Dorsolateral prefrontal cortex (tissue), 120 donors: ENCODE measurements at regions of chr3 and their contacts with region 1.

Region 1: GRCh38 chr3:132352541-132353143 is 35.4 kb downstream of the ACP3 start:
- DNase-seq: peak in 6 of 10 donors; percentile 7 to 63 (median 46)
- H3K4me3 ChIP-seq: no peak overlapping the region
- H3K27ac ChIP-seq: no peak overlapping the region
- H3K27me3 ChIP-seq: peaks cover 0 to 3% (median 0%) of the 10 kb centered on the region in 45 donors
- CTCF ChIP-seq: peak; percentile 52 to 95 (median 87)

Region 2: GRCh38 chr3:132399054-132399929 is 46.6 kb after region 1 on chr3:
- intact Hi-C with region 1: loop called (anchors 1 to 5 kb)
- DNase-seq: peak in 2 of 10 donors; percentile 41 to 42
- H3K4me3 ChIP-seq: no peak overlapping the region
- H3K27ac ChIP-seq: no peak overlapping the region
- H3K27me3 ChIP-seq: no peaks in the 10 kb centered on the region
- CTCF ChIP-seq: peak; percentile 39 to 97 (median 82)

Region 3: GRCh38 chr3:132405188-132405587 is 52.5 kb after region 1 on chr3:
- intact Hi-C with region 1: loop called in 1 of 2 experiments (anchors 5 kb)
- DNase-seq: no peak
- H3K4me3 ChIP-seq: no peak overlapping the region
- H3K27ac ChIP-seq: peak overlapping the region in 21 of 59 donors; percentile 1 to 72 (median 40)
- H3K27me3 ChIP-seq: no peaks in the 10 kb centered on the region
- CTCF ChIP-seq: no peak

Region 4: GRCh38 chr3:132432639-132433038 is 80.0 kb after region 1 on chr3:
- intact Hi-C with region 1: no loop called
- DNase-seq: no peak
- H3K4me3 ChIP-seq: no peak overlapping the region
- H3K27ac ChIP-seq: no peak overlapping the region
- H3K27me3 ChIP-seq: no peaks in the 10 kb centered on the region
- CTCF ChIP-seq: no peak

Region 5: DNA sequence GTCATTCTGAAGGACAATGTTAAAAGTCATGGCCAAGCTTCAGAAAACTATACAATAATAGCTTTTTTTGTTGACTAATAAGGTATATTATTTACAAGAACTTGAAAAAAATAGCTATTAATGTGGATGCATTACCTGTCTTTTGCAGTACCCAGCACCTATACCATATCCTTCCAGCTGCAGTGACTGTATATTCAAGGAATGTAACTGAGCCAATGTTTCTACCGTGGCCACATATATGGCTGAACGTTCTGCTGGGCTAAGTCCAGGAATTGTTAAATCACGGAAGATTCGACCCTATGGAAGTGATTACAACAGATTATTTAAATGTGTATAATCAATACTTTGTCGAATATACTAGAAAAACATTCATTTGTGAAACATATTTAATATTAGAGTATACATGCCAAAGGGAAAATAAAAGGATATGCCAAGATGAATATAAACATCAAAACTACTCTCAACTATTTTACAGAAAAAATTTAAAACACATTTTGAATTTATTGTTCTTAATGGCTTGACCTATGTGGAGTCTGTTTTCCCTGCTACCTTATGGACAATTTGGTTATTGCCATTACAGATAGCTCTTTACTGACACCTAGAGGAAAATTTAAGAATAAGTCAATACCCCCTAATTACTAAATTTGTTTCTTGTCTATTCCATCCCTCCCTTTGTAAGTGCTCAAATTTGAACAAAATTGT is 289.3 kb after region 1 on chr3:
- intact Hi-C with region 1: loop called in 1 of 2 experiments (anchors 10 kb)
- DNase-seq: no peak
- H3K4me3 ChIP-seq: no peak overlapping the region
- H3K27ac ChIP-seq: no peak overlapping the region
- H3K27me3 ChIP-seq: no peaks in the 10 kb centered on the region
- CTCF ChIP-seq: peak; percentile 66 to 93 (median 80)